ENCODE measurements at regions of chr11 and their contacts with region 1.

Region 1: GRCh38 chr11:46747150-46747549 is 28.1 kb downstream of the F2 start:
- DNase-seq: no peak
- H3K4me3 ChIP-seq: no peak overlapping the region
- H3K27ac ChIP-seq: no peak overlapping the region
- H3K4me1 ChIP-seq: no peaks in the 10 kb centered on the region
- CTCF ChIP-seq: no peak

Region 2: GRCh38 chr11:46686886-46687795 is 60.0 kb before region 1 on chr11:
- CTCF ChIA-PET with region 1: no interaction called
- POLR2A ChIA-PET with region 1: no interaction called
- intact Hi-C with region 1: no loop called
- DNase-seq: no peak
- H3K4me3 ChIP-seq: no peak overlapping the region
- H3K27ac ChIP-seq: no peak overlapping the region
- H3K4me1 ChIP-seq: no peaks in the 10 kb centered on the region
- CTCF ChIP-seq: no peak

Region 3: DNA sequence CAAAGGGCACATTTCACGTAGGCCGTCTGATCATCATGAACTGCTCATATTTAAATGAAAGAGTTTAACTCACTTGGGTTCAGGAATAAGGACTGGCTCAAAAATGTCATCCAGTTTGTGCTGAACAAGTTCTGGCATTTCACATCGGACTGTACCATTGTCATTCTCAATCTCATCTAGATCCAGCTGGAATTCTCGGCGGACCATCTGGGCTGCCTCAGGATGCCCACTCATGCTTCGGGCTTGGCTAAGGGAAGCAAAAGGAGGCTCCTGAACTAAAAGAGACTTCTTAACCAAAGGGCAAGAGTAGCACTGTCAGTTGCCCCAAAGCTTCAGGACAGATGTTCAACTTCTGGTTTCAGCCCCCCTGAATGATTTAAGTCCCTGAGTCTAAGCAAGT is 12.0 kb after region 1 on chr11:
- CTCF ChIA-PET with region 1: no interaction called
- POLR2A ChIA-PET with region 1: interaction called, 14 read pairs
- intact Hi-C with region 1: no loop called
- DNase-seq: no peak
- H3K4me3 ChIP-seq: no peak overlapping the region
- H3K27ac ChIP-seq: no peak overlapping the region
- H3K4me1 ChIP-seq: no peaks in the 10 kb centered on the region
- CTCF ChIP-seq: no peak

Region 4: DNA sequence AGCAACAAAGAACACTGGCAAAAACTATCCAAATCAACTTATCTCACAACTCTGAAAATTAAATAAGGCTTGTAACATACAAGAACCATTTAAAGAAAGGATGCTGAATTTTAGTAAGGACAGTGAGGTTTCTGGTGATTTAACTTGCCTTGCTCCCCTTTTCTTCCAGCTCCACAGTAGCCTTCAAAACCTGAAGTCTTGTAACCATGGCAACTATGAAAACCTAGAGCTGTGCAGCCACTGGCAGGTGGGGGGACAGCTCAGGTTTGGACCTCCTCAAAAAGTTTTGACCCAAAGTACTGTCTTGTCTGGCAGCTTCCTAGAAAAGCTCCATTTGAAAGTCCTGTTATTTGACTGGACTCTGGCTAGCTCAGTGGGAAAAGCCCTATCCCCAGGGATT is 39.0 kb after region 1 on chr11:
- CTCF ChIA-PET with region 1: no interaction called
- POLR2A ChIA-PET with region 1: no interaction called
- intact Hi-C with region 1: loop called (anchors 5 kb)
- DNase-seq: no peak
- H3K4me3 ChIP-seq: no peak overlapping the region
- H3K27ac ChIP-seq: no peak overlapping the region
- H3K4me1 ChIP-seq: no peaks in the 10 kb centered on the region
- CTCF ChIP-seq: no peak